Posterior vena cava (tissue), 2 donors: ENCODE measurements at regions of chr15 and their contacts with region 1.

Region 1: GRCh38 chr15:100033140-100033857 is 300.1 kb upstream of the LYSMD4 start:
- DNase-seq: no peak

Region 2: GRCh38 chr15:99954361-99955180 is 78.7 kb before region 1 on chr15:
- intact Hi-C with region 1: no loop called
- DNase-seq: no peak

Region 3: GRCh38 chr15:100008258-100008657 is 25.0 kb before region 1 on chr15:
- intact Hi-C with region 1: no loop called
- DNase-seq: peak; percentile 70

Region 4: GRCh38 chr15:100125401-100126191 is 92.3 kb after region 1 on chr15:
- intact Hi-C with region 1: loop called in 1 of 2 experiments (anchors 10 kb)
- DNase-seq: peak; percentile 92

Region 5: GRCh38 chr15:100341662-100342560 is 308.6 kb after region 1 on chr15 and contains the start of gene ADAMTS17:
- intact Hi-C with region 1: loop called in 1 of 2 experiments (anchors 10 kb)
- DNase-seq: peak; percentile 97
- total RNA-seq, gene ADAMTS17: 4.0 to 6.8 TPM